ENCODE measurements at regions of chr1 and their contacts with region 1.

Region 1: GRCh38 chr1:181152892-181153633 is 64.6 kb downstream of the IER5 start:
- DNase-seq: peak; percentile 90 to 99 (median 94)
- ATAC-seq: peak; percentile 98
- H3K4me3 ChIP-seq: no peak overlapping the region
- H3K27ac ChIP-seq: peak overlapping the region; percentile 65
- H3K4me1 ChIP-seq: peaks cover 27 to 31% of the 10 kb centered on the region in 2 experiments
- H3K27me3 ChIP-seq: no peaks in the 10 kb centered on the region
- CTCF ChIP-seq: peak; percentile 71 to 86 (median 80)
- EP300 ChIP-seq: peak; percentile 99
- POLR2A ChIP-seq: no peak
- RAD21 ChIP-seq: peak; percentile 78 to 79

Region 2: GRCh38 chr1:180934563-180934962 is 218.5 kb before region 1 on chr1:
- CTCF ChIA-PET with region 1: no interaction called
- POLR2A ChIA-PET with region 1: no interaction called
- in situ Hi-C with region 1: no loop called
- intact Hi-C with region 1: loop called (anchors 5 kb)
- DNase-seq: no peak
- ATAC-seq: no peak
- H3K4me3 ChIP-seq: no peak overlapping the region
- H3K27ac ChIP-seq: no peak overlapping the region
- H3K4me1 ChIP-seq: peaks cover 15 to 36% of the 10 kb centered on the region in 2 experiments; a peak in 4 of 5 replicates
- H3K27me3 ChIP-seq: peaks cover 3 to 4% of the 10 kb centered on the region in 2 experiments; a peak in 1 of 5 replicates
- CTCF ChIP-seq: no peak
- EP300 ChIP-seq: no peak
- POLR2A ChIP-seq: no peak
- RAD21 ChIP-seq: no peak

Region 3: DNA sequence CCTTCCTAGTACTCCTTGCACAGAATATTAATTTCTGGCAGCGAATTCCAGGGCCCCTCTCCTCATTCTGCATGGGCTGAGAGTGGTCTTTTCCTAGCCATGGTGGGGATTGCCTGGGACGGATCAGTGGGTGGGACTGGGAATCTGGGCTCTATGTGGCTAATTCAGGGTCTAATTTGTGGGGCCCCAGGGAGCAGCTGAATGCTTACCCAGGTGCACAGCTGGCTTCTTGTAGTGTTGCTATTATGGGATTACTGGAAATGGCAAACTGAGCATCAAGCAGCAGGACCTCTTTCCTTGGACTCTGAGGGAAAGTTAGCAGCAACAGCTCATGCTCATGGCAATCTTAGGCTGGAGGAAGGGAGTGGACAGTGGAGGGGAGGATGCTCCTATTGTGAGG is 143.1 kb after region 1 on chr1:
- CTCF ChIA-PET with region 1: no interaction called
- POLR2A ChIA-PET with region 1: no interaction called
- in situ Hi-C with region 1: no loop called
- intact Hi-C with region 1: no loop called
- DNase-seq: no peak
- ATAC-seq: no peak
- H3K4me3 ChIP-seq: no peak overlapping the region
- H3K27ac ChIP-seq: no peak overlapping the region
- H3K4me1 ChIP-seq: no peaks in the 10 kb centered on the region
- H3K27me3 ChIP-seq: no peaks in the 10 kb centered on the region
- CTCF ChIP-seq: no peak
- EP300 ChIP-seq: no peak
- POLR2A ChIP-seq: no peak
- RAD21 ChIP-seq: no peak